Calu3 (cell line): ENCODE measurements at regions of chr9 and their contacts with region 1.

Region 1: GRCh38 chr9:73348471-73348870 is 196.8 kb downstream of the ANXA1 start:
- DNase-seq: no peak
- H3K4me3 Mint-ChIP-seq: no peak overlapping the region
- H3K27ac Mint-ChIP-seq: no peak overlapping the region
- H3K4me1 Mint-ChIP-seq: peaks cover 9% of the 10 kb centered on the region
- H3K27me3 Mint-ChIP-seq: no peaks in the 10 kb centered on the region
- CTCF ChIP-seq: no peak

Region 2: DNA sequence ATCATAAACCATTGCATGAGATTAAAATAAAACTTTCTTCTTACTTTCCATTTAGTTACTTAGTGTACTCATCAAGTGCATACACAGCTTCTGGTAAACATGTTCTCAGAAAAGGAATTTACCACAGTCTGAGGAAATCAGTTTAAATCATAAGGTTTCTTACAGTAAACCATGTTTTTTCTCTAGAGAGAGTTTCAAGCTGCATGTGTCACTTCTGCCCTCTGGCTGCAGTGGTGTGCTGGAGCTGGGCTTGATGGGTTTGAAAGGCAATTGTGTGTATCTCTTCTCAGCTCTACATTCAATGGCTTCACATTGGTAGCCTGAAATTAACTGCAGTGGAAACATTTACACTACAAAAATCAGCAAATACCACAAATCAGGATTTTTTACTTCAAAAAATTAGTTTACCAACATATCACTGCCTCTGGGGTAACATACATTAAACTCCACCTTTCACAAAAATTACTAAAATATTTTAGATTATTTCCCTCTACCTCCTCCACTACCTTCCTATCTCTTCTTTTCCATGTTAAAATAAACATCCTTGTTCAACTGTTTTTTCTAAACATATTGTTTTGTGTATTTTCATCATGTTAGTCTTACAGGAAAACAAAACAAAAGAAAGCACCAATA is 217.5 kb after region 1 on chr9:
- CTCF ChIA-PET with region 1: no interaction called
- intact Hi-C with region 1: loop called (anchors 10 kb)
- DNase-seq: peak; percentile 41
- H3K4me3 Mint-ChIP-seq: no peak overlapping the region
- H3K27ac Mint-ChIP-seq: no peak overlapping the region
- H3K4me1 Mint-ChIP-seq: no peaks in the 10 kb centered on the region
- H3K27me3 Mint-ChIP-seq: no peaks in the 10 kb centered on the region
- CTCF ChIP-seq: no peak